ENCODE measurements at regions of chr16 and their contacts with region 1.

Region 1: GRCh38 chr16:31873556-31874365 is at the start of gene ZNF267:
- DNase-seq: peak; percentile 88
- CTCF ChIP-seq: no peak

Region 2: DNA sequence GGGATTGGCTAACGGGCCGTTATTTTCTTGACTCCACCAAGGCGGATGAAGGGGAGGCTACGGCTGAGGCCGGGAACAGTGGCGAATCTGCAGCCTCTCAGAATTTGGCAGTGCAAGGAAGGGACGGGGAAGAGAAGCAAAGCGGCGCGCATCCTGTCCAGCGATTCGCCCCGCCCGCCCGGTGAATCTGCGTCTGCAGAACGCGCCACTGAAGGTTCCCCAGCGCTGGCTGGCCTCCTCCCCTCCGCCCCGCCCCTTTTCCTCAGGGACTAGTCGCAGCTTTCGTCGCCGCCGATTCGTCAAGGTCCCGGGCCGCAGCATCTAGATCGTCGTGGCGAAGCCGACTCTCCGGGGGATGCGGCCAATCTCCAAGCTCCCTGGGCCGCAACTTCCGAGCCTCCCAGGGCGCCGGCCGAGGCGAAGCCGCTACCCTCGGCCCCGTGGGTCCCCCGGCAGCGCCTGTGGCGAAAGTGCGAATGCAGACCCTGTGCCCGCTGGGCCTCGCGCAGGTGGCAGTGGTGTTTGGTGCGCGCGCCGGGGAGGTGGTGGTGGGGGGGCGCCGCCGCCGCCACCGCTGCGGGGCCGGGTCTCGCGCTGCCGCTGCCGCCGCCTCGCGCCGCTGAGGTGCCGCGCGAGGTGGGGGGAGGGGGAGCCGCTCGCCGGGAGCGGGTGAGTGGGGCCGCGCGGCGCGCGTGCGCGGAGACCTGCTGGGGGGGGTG is 916.1 kb before region 1 on chr16 and contains the start of gene SETD1A:
- in situ Hi-C with region 1: loop called (anchors 25 kb)
- DNase-seq: peak; percentile 98
- CTCF ChIP-seq: no peak

Region 3: DNA sequence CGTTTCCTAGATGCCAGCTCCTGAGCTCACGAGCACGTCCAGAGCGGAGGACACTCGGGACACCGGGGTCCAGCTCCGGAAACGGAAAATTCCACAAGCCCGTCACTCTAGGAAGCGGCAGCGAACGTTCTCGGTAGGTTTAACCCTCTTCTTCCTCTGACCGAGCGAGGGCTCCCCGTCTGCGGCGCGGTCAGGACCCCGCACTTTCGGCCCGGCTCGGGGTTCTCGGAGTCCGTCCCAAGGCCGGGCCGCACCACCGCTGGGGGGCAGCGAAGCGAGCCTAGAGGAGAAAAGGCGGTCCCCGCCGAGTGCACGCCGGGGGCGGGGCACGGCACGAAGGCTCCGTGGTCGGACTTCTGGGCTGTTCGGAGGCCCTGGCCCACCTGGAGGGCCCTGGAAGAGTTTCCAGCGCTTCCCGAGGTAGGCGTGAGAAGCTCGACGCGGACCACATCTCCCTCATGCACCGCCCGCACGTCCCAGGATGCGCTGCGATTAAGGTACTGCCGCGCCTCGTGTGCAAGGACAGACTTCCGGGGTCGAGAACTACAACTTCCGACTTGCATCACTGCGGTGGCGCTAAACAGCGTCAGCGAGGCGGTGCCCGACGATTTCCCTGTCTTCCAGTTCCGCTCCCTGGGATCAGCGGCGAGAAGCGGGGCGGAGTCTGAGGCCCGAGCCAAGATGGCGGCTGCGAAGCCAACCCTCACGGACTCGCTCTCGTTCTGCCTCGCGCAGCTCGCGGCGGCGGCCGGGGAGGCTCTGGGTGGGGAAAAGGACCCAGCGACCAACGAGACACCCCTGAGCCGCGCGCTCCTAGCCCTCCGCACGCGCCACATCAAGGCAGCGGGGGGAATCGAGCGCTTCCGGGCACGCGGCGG is 414.7 kb before region 1 on chr16 and contains the start of gene ARMC5:
- in situ Hi-C with region 1: loop called (anchors 25 kb)
- DNase-seq: peak; percentile 93
- CTCF ChIP-seq: peak; percentile 81

Region 4: GRCh38 chr16:31713071-31713944 is 160.5 kb before region 1 on chr16:
- in situ Hi-C with region 1: loop called (anchors 25 kb)
- DNase-seq: peak; percentile 94
- CTCF ChIP-seq: no peak

Region 5: GRCh38 chr16:31734265-31734664 is 139.5 kb before region 1 on chr16:
- in situ Hi-C with region 1: no loop called
- DNase-seq: no peak
- CTCF ChIP-seq: no peak

Region 6: DNA sequence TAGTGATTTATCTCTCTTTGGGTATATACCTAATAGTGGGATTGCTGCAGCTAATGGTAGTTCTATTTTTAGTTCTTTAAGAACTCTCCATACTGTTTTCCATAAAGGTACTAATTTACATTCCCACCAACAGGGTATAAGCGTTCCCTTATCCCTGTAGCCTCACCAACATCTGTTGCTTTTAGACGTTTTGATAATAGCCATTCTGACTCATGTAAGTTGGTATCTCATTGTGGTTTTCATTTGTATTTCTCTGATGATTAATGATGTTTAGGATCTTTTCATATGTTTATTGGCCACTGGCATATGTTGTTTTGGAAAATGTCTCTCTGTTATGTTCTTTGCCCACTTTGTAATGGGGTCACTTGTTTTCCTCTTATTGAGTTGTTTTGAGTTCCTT is 88.6 kb before region 1 on chr16:
- in situ Hi-C with region 1: no loop called
- DNase-seq: no peak
- CTCF ChIP-seq: no peak

Measured in GM13977 (cell line).